Activated T-helper 2 cell treated with anti-CD3 and anti-CD28 coated beads, Interferon-gamma antibody, Interleukin-2, Interleukin-4, amounts not matched to agents 10 μg/mL and 5 μg/mL and 100 μg/mL, durations not matched to agents 14 hours and 24 hours and 36 hours (primary cell): ENCODE measurements at regions of chr3 and their contacts with region 1.

Region 1: DNA sequence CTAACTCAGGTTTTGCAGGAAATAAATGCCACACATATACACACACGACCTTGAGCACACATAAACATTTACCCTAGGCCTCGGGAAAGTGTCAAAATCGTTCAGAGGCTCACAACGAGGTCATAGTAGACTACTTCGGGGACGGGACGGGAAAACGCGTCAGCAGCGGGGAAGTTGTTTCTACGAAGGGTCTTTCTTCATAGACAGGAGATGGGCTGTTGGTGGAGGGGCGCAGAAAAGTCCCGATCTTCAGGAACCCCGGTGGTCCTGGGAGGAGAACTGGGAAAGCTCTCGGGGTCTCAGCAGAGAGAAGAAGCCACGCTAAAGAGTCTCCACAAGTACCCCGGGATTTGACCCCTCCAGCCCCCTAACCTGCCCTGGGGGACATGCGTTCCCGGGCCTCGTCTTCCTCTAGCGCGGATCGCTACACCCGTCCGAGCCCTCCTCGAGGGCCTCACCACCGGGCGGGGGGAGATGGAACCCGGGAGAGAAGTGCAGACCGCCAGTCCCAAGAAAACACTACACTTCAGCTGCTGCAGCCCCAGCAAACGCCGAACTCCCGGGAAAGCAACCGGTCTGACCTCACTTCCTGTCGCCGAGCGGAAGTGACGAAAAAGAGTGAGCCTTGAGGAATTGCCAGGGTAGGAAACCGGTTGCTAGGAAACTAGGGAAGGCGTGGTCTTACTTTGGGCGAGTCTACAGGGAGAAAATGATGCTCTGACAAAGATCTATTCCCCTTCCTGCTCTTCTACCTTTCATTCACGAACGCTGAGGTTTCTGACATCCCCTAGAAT is at the start of gene PIK3R4:
- DNase-seq: peak; percentile 94
- H3K4me3 Mint-ChIP-seq: peak within 1 kb of the TSS; percentile 84
- H3K27ac Mint-ChIP-seq: peak within 1 kb of the TSS; percentile 93
- H3K4me1 Mint-ChIP-seq: peaks cover 36% of the 10 kb centered on the region
- H3K27me3 Mint-ChIP-seq: no peaks in the 10 kb centered on the region
- total RNA-seq, gene PIK3R4: 33.4 and 34.9 TPM in 2 replicates

Region 2: DNA sequence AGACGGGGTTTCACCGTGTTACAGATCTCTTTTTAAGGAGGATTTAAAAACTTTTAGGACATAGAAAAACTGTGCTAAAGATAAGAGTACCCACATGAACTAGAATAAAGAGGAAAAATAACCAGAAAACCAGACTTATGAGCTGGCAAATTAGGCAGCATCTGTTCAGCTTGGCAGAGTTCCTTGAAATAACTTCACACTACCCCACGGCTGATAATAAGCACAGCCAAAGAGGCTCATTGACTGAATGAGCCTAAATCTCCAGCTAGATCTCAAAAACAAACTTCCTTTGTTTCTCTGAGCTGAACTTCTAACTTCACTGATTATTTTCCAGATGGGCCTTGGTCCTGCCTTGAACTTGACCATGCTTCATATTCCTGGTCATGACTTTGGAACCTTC is 26.9 kb after region 1 on chr3:
- intact Hi-C with region 1: no loop called
- DNase-seq: no peak
- H3K4me3 Mint-ChIP-seq: no peak overlapping the region
- H3K27ac Mint-ChIP-seq: no peak overlapping the region
- H3K4me1 Mint-ChIP-seq: no peaks in the 10 kb centered on the region
- H3K27me3 Mint-ChIP-seq: peaks cover 28% of the 10 kb centered on the region

Region 3: DNA sequence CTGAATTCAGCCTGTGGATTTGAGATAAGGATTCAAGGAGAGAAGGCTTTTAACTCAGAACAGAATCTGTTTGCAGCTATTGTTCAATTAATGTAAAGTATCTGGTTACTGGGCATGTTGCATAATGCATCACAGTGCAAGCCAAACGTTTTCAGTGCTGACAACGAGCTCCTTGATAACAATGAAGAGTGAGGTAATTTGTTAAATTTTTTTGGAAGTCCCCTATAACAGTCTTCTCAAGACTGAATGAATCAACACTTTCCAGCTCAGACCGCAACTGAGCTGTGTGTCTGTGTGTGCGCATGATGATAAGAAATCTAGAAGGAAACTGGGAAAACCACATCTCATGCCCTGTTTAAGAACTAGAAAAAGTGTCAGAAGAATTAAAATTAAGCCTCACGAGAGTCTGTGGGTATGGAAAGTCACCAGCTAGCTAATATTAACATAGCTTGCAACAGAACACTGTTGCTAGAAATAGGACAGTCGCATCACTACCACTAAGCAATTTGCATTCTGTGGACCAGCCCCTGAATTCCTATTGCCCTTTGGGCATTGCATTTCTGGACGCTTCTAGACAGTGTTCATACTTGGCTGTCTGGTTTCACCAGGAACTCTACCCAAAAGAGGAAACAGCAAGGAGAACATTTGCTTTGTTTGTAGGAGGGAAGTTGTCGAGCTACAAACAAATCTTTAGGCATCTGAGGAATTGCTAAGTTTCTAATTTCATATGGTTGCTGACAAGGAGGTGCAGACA is 103.8 kb after region 1 on chr3:
- intact Hi-C with region 1: loop called (anchors 2 kb)
- DNase-seq: peak; percentile 54
- H3K4me3 Mint-ChIP-seq: peak overlapping the region; percentile 28
- H3K27ac Mint-ChIP-seq: peak overlapping the region; percentile 71
- H3K4me1 Mint-ChIP-seq: peaks cover 33% of the 10 kb centered on the region
- H3K27me3 Mint-ChIP-seq: peaks cover 15% of the 10 kb centered on the region

Region 4: DNA sequence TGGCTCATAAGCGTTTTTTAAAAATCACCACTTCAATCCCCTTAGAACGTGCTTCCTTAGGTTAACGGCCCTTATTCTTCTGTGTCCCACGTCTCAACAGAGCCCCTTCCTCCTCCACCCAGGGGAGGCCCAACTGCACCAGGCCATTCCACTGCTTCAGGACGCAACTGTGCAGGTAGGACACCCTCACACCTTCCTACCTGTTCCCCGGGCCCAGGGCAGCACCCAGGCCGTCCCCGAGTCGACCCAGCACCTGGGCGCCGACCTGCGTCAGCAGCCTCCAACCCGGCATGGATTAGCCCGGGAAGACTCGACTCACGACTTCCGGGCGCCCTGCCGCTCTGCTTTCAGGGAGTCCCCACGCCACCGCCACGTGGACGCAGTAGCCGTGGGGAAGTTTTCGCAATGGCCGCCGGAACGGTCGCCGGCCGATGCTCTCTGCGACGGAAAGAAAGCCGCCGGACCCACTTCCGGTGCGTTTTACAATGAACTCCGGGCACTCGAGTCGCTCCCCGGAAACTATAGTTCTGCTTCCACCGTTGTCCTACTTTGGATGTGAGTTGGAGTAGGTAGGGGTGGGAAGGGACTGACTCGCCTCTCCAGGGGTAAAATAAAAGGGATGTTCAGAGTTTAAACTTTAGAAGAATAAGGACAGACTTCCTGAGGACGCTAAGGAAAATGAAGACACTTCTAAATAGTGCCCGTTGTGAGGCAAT is 756.2 kb after region 1 on chr3 and contains the start of gene MRPL3:
- intact Hi-C with region 1: loop called (anchors 2 kb)
- DNase-seq: peak; percentile 75
- H3K4me3 Mint-ChIP-seq: peak within 1 kb of the TSS; percentile 99
- H3K27ac Mint-ChIP-seq: peak within 1 kb of the TSS; percentile 97
- H3K4me1 Mint-ChIP-seq: peaks cover 31% of the 10 kb centered on the region
- H3K27me3 Mint-ChIP-seq: no peaks in the 10 kb centered on the region
- total RNA-seq, gene MRPL3: 149 and 157 TPM in 2 replicates